Ascending aorta (tissue), 2 donors: ENCODE measurements at regions of chr5 and their contacts with region 1.

Region 1: GRCh38 chr5:67301285-67301903 is 104.8 kb upstream of the CD180 start:
- DNase-seq: peak; percentile 63 to 94
- H3K4me3 ChIP-seq: no peak overlapping the region
- H3K27ac ChIP-seq: peak overlapping the region; percentile 75 to 89
- H3K4me1 ChIP-seq: peaks cover 7 to 28% of the 10 kb centered on the region in 2 donors
- H3K27me3 ChIP-seq: no peaks in the 10 kb centered on the region
- CTCF ChIP-seq: no peak

Region 2: DNA sequence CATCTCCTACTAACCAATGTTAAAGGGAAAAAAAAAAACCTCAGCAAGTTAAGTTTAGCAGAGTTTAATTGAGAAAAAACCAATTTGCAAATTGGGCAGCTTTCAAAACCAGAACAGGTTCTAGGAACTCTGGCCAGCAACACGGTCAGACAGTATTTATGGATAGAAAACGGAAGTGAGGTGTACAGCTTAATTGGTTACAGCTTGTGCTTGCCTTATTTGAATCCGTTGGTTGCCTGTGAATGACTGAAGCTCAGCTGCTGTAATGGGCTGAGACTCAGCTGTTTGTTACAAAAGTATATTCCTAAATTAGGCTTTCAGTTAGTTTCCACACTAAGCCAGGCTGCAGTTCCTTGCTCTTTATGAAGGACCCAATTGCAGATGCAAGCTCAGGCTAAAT is 940.3 kb before region 1 on chr5:
- intact Hi-C with region 1: no loop called
- DNase-seq: no peak
- H3K4me3 ChIP-seq: no peak overlapping the region
- H3K27ac ChIP-seq: no peak overlapping the region
- H3K4me1 ChIP-seq: no peaks in the 10 kb centered on the region
- H3K27me3 ChIP-seq: no peaks in the 10 kb centered on the region
- CTCF ChIP-seq: no peak

Region 3: GRCh38 chr5:66860199-66860975 is 441.0 kb before region 1 on chr5:
- intact Hi-C with region 1: no loop called
- DNase-seq: no peak
- H3K4me3 ChIP-seq: no peak overlapping the region
- H3K27ac ChIP-seq: no peak overlapping the region
- H3K4me1 ChIP-seq: no peaks in the 10 kb centered on the region
- H3K27me3 ChIP-seq: no peaks in the 10 kb centered on the region
- CTCF ChIP-seq: no peak

Region 4: DNA sequence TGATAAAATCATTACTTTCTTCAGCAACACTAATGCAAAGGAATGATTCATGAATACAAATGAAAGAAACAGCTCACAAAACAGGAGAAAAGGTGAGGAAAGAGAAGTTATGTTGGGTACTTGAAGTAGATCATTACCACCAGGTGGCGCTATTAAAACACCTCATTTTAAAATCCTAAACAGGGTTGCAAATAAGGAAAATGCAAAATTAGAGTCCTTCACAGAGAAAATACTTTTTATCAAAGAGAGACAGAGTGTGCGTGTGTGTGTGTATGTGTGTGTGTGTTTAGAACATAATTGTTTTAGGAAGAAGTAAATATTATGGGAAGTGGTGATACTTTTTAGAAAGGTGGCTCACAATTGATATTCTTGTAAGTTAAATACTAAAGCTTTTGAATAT is 55.3 kb before region 1 on chr5:
- intact Hi-C with region 1: loop called (anchors 5 kb)
- DNase-seq: no peak
- H3K4me3 ChIP-seq: no peak overlapping the region
- H3K27ac ChIP-seq: peak overlapping the region in 1 of 2 donors; percentile 75
- H3K4me1 ChIP-seq: peaks cover 11 to 18% of the 10 kb centered on the region in 2 donors
- H3K27me3 ChIP-seq: no peaks in the 10 kb centered on the region
- CTCF ChIP-seq: peak; percentile 59 to 79 (median 67)

Region 5: GRCh38 chr5:67268231-67269021 is 33.0 kb before region 1 on chr5:
- intact Hi-C with region 1: loop called (anchors 1 kb)
- DNase-seq: peak; percentile 12 to 90
- H3K4me3 ChIP-seq: peak overlapping the region; percentile 31 to 43
- H3K27ac ChIP-seq: peak overlapping the region; percentile 92 to 93
- H3K4me1 ChIP-seq: peaks cover 16 to 24% of the 10 kb centered on the region in 2 donors
- H3K27me3 ChIP-seq: no peaks in the 10 kb centered on the region
- CTCF ChIP-seq: no peak

Region 6: GRCh38 chr5:67289763-67290521 is 11.5 kb before region 1 on chr5:
- intact Hi-C with region 1: loop called (anchors 1 kb)
- DNase-seq: no peak
- H3K4me3 ChIP-seq: no peak overlapping the region
- H3K27ac ChIP-seq: peak overlapping the region; percentile 27 to 37
- H3K4me1 ChIP-seq: peaks cover 0 to 16% of the 10 kb centered on the region in 2 donors
- H3K27me3 ChIP-seq: no peaks in the 10 kb centered on the region
- CTCF ChIP-seq: no peak

Region 7: GRCh38 chr5:67693956-67694809 is 392.8 kb after region 1 on chr5:
- intact Hi-C with region 1: loop called (anchors 1 kb)
- DNase-seq: peak; percentile 74 to 96
- H3K4me3 ChIP-seq: no peak overlapping the region
- H3K27ac ChIP-seq: peak overlapping the region; percentile 73 to 76
- H3K4me1 ChIP-seq: peaks cover 0 to 24% of the 10 kb centered on the region in 2 donors
- H3K27me3 ChIP-seq: no peaks in the 10 kb centered on the region
- CTCF ChIP-seq: no peak

Region 8: DNA sequence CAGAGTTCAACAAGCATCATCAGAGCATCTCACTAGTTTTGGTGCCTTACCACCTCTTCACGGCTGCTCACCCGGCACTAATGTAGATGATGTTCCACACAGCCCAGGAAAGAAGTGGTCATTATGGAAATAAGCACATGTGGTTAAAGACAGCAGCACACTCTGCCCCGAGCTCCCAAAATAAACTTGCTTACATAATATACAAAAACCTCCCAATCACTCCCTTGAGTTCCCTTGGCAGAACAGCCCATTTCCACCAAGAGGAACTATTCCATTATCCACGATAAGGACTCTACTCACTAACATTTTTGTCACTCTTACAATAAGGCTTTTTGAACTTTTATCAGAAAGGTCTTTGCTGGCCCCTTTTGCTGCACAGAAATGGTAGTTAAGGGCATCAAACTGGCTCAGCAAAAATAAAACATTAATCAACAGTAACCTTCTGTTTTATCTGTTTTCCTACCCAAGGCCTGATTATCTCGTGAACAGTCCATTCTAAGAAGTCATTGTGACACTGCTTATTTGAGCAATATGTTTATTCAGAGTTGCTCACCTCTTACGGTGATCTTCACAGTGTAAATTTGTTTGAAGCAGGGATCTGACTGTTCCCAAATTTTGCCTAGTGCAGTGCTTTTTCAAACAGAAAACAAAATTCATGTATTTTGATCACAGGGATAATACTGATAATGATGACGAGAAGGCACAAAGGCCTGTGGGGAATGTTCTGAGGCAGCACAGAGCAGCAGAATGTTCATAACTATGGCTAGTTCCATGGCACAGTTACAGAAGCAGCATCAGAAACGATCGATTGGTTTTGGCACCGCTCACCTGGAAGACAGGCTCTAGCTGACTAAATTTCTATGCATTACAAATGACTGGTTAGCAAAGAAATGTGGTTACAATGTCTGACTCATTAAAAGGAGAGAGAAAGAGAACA is 514.3 kb after region 1 on chr5:
- intact Hi-C with region 1: no loop called
- DNase-seq: no peak
- H3K4me3 ChIP-seq: no peak overlapping the region
- H3K27ac ChIP-seq: peak overlapping the region; percentile 28 to 45
- H3K4me1 ChIP-seq: peaks cover 8 to 25% of the 10 kb centered on the region in 2 donors
- H3K27me3 ChIP-seq: no peaks in the 10 kb centered on the region
- CTCF ChIP-seq: no peak

Region 9: DNA sequence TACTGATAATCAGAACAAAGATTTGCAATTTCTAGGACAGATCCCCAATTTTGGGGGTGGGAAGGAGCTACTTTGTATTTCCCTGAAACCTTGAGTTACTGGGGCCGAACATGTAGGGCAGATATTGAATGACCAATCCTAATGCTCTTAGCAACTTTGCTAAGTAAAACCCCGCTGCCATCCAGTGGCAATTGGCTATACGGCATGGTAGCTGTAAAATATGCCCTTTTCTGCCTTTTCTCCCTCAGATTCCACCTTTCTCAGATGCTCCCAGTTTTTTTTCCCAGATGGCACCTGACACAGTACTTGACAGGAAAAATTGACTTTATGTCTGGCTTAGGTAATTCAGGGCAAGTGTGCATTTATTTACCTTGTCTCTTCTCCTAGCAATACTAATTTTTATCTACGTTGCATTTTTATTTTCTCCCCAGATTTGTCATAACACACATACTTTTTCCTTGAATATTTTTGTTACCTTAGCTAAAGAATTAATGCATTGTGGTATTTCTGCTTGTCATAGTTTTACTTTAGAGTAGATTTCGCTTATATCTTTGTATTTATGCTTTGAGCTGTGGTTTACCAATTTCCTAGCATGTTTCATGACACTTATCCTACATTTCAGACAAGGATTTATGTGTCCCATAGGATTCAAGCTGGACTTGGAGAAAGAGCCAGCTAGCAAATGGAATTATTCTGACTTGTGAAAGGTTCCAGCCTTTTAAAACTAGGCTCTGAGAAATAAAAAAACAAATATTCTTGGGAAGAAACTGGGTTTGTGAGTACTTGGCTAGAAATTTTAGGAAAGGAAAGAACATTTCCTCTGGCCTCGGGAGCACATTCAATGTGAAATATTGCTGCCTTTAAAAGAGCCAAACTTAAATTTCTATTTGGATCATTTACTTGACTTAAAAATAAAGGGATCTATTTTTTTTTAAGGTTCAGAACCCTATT is 951.6 kb after region 1 on chr5:
- intact Hi-C with region 1: loop called (anchors 5 kb)
- DNase-seq: peak in 1 of 2 donors; percentile 77
- H3K4me3 ChIP-seq: peak overlapping the region; percentile 17 to 37
- H3K27ac ChIP-seq: peak overlapping the region; percentile 66 to 77
- H3K4me1 ChIP-seq: peaks cover 15 to 85% of the 10 kb centered on the region in 2 donors
- H3K27me3 ChIP-seq: no peaks in the 10 kb centered on the region
- CTCF ChIP-seq: peak; percentile 69 to 84 (median 70)